GM10248 (cell line): ENCODE measurements at regions of chr4 and their contacts with region 1.

Region 1: GRCh38 chr4:16827794-16828724 is 70.4 kb downstream of the LDB2 start:
- DNase-seq: no peak
- CTCF ChIP-seq: no peak

Region 2: GRCh38 chr4:16838226-16838875 is 10.3 kb after region 1 on chr4:
- CTCF ChIA-PET with region 1: interaction called, 11 read pairs
- POLR2A ChIA-PET with region 1: no interaction called
- DNase-seq: no peak
- CTCF ChIP-seq: no peak